Heart left ventricle (tissue), 16 donors: ENCODE measurements at regions of chr3 and their contacts with region 1.

Region 1: GRCh38 chr3:39981547-39982184 is 172.3 kb downstream of the MYRIP start:
- DNase-seq: no peak
- ATAC-seq: no peak
- H3K4me3 ChIP-seq: no peak overlapping the region
- H3K27ac ChIP-seq: no peak overlapping the region
- H3K4me1 ChIP-seq: peaks cover 0 to 8% (median 0%) of the 10 kb centered on the region in 12 donors
- H3K27me3 ChIP-seq: no peaks in the 10 kb centered on the region
- CTCF ChIP-seq: no peak
- POLR2A ChIP-seq: no peak

Region 2: DNA sequence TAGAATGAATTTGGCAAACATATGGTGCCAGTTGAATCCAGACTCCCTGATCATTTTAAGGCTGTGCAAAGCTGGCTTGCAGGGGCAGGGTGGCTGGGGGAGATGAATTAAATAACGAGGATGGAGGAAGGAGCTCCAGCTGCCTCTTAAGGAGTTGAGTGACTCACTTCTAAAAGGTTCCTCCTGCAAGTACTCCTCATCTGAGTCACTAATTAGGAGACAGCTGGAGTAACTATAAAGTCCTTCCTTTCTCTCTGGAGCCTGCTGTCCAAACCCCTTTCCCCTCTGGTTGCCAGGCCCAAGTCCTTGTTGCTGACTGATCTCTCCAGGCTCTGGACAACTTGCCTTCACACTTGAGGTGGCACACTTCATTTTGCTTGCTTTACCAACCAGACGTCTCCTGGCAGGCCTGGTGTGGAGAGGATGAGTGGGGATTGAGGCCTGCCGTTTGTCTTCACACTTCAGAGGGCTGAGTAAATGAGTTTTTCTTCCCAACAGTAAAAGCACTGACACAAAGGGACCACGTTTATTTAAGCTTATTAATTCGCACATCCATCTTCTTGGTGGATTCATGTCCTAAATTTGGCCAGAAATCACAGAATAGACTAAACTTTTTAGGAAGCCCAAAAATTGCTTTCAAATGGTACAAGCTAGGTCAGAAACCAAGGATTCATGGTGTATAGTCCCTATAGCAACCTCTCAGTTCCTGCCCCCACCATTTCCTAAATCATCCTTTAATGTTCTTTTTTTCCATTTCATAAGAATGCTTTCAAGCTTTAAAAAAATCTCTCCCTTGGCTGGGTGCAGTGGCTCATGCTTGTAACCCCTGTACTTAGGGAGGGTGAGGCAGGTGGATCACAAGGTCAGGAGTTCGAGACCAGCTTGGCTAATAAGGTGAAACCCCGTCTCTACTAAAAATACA is 262.7 kb before region 1 on chr3:
- intact Hi-C with region 1: loop called in 2 of 10 experiments (anchors 10 kb)
- DNase-seq: no peak
- ATAC-seq: peak in 1 of 4 donors; percentile 28
- H3K4me3 ChIP-seq: no peak overlapping the region
- H3K27ac ChIP-seq: no peak overlapping the region
- H3K4me1 ChIP-seq: no peaks in the 10 kb centered on the region
- H3K27me3 ChIP-seq: no peaks in the 10 kb centered on the region
- CTCF ChIP-seq: no peak
- POLR2A ChIP-seq: no peak

Region 3: DNA sequence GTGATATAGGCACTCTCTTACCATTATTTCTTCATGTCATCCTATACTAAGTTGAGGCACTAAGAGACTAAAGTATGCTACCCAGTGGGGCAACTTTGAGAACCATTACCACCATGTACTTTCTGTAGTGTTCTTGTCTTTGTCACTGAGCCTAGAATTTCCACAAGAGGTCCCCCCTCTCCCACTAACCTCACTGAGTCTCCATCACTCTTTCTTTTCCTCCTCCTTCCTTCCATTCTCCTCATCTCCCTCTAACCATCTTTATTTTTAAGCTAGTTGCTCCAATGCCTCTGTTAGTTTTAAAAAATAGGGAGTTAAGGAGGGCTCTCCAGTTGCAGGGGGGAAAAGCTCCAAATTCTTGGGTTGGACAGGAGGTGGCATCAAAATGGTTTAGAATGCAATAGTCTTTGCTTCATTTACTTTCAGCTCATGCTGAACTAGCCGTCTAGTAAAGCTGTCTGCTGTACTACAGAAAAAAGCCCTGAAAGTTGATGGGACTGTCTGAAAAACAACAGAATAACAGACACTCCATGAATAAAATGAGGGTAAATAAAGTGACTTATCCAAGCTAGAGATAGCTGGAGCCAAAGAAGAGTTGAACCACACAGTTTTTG is 257.3 kb before region 1 on chr3:
- intact Hi-C with region 1: loop called in 2 of 10 experiments (anchors 10 kb)
- DNase-seq: no peak
- ATAC-seq: peak in 1 of 4 donors; percentile 37
- H3K4me3 ChIP-seq: no peak overlapping the region
- H3K27ac ChIP-seq: no peak overlapping the region
- H3K4me1 ChIP-seq: no peaks in the 10 kb centered on the region
- H3K27me3 ChIP-seq: peaks cover 0 to 3% (median 0%) of the 10 kb centered on the region in 9 donors
- CTCF ChIP-seq: peak in 11 of 12 donors; percentile 21 to 55 (median 37)
- POLR2A ChIP-seq: no peak